Naive thymus-derived CD8-positive, alpha-beta T cell (primary cell): ENCODE measurements at regions of chr3 and their contacts with region 1.

Region 1: DNA sequence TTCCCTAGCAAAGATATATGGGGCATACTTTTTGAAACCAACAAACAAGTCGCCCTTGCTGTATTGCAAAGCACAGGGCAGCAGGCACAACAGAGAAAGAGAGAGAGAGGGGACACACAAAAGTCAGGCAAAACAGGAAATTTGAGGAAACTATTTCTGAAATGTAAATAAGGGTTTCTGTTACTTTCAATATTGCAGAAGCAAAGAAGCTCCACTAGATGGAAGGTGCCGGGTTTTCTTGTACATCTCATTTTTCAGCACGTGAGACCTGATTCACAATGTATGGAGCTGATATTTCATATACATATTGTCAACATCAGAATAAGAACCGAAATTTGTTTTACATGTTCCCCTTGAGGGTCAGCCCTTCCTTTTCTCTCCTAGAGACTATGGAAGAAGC is 127.4 kb downstream of the FOXP1 start:
- DNase-seq: peak in 4 of 10 donors; percentile 26 to 57 (median 54)
- ATAC-seq: peak; percentile 18 to 32
- H3K4me3 Mint-ChIP-seq: peak overlapping the region; percentile 60 to 88 (median 80)
- H3K27ac Mint-ChIP-seq: peak overlapping the region; percentile 89 to 99 (median 98)
- H3K4me1 Mint-ChIP-seq: peaks cover 50 to 97% (median 87%) of the 10 kb centered on the region in 4 donors
- H3K27me3 Mint-ChIP-seq: no peaks in the 10 kb centered on the region

Region 2: GRCh38 chr3:71416876-71417275 is 39.3 kb before region 1 on chr3:
- POLR2A ChIA-PET with region 1: interaction called, 19 read pairs
- DNase-seq: peak in 9 of 10 donors; percentile 29 to 80 (median 69)
- ATAC-seq: peak; percentile 64 to 74
- H3K4me3 Mint-ChIP-seq: peak overlapping the region; percentile 53 to 88 (median 76)
- H3K27ac Mint-ChIP-seq: peak overlapping the region; percentile 91 to 99 (median 96)
- H3K4me1 Mint-ChIP-seq: peaks cover 44 to 95% (median 89%) of the 10 kb centered on the region in 4 donors
- H3K27me3 Mint-ChIP-seq: no peaks in the 10 kb centered on the region

Region 3: GRCh38 chr3:71438071-71438685 is 18.0 kb before region 1 on chr3:
- POLR2A ChIA-PET with region 1: interaction called, 164 read pairs
- DNase-seq: no peak
- ATAC-seq: no peak
- H3K4me3 Mint-ChIP-seq: peak overlapping the region; percentile 7 to 84 (median 68)
- H3K27ac Mint-ChIP-seq: peak overlapping the region; percentile 95 to 99 (median 99)
- H3K4me1 Mint-ChIP-seq: peaks cover 49 to 93% (median 91%) of the 10 kb centered on the region in 4 donors
- H3K27me3 Mint-ChIP-seq: no peaks in the 10 kb centered on the region

Region 4: GRCh38 chr3:71466483-71466882 is 10.3 kb after region 1 on chr3:
- POLR2A ChIA-PET with region 1: interaction called, 10 read pairs
- DNase-seq: no peak
- ATAC-seq: no peak
- H3K4me3 Mint-ChIP-seq: peak overlapping the region in 2 of 10 donors; percentile 32 to 67
- H3K27ac Mint-ChIP-seq: peak overlapping the region; percentile 5 to 92 (median 82)
- H3K4me1 Mint-ChIP-seq: peaks cover 40 to 93% (median 82%) of the 10 kb centered on the region in 4 donors
- H3K27me3 Mint-ChIP-seq: no peaks in the 10 kb centered on the region

Region 5: DNA sequence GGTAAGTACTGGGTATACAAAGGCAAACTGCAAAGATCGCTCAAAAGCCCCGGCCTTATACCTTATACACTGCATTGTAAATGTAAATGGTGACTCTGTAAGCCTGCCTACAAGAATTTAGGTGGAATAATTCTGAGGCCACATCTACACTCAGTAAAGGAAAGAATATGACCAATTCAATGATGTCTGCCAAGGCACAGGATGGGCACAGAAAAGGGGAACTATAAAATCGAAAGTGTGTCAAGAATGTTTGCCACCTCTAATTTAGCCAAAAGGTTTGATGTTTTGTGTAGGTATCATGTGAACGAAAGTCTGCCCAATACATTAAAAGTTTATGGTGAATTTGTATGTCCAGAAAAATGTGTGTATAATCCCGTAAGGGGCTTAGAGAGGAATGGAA is 31.3 kb after region 1 on chr3:
- POLR2A ChIA-PET with region 1: interaction called, 126 read pairs
- DNase-seq: peak in 2 of 10 donors; percentile 26 to 31
- ATAC-seq: peak in 1 of 2 donors; percentile 11
- H3K4me3 Mint-ChIP-seq: peak overlapping the region; percentile 74 to 100 (median 88)
- H3K27ac Mint-ChIP-seq: peak overlapping the region; percentile 95 to 100 (median 98)
- H3K4me1 Mint-ChIP-seq: peaks cover 32 to 91% (median 87%) of the 10 kb centered on the region in 4 donors
- H3K27me3 Mint-ChIP-seq: no peaks in the 10 kb centered on the region

Region 6: DNA sequence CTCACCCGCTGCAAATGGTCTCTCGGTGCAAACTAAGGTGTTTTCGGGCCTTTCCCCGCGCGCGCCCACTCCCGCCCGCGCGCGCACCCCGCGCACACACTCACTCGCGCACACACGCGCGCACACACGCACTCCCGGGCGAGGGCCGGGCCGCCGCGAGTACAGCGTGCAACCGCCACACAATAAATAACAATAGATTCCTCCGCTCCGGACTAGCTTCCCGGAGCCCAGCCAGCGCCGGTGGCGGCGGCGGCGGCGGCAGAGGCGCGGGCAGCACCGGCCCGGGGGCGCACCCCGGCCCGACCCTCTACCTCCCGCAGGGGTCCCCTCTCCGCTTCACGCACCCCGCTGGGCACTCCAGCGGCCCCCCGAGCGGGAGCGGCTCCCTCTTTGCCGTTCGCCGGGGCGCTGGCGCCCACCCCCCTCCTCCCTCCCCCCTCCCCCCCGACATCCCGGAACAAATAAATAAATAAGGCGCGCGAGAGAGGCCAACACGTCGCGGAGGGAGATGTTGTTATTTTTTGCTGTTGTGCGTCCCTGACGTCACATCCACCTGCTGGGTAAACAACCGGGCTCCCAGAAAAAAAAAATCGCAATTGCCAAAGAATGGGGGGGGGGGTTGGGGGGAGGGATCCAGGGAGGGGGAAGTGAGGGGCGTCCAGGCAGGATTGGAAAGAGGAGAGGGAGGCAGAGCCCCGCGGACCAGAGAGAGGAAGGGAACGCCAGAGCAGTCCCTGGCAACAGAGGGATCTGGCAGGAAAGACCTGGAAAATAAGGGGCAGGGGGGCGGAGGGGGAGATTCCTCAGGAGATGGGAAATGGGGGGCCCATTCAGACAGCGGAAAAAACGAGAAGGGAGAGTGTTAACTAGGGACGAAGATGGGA is 127.7 kb after region 1 on chr3 and contains the start of gene FOXP1:
- POLR2A ChIA-PET with region 1: interaction called, 13 read pairs
- DNase-seq: peak; percentile 33 to 76 (median 67)
- ATAC-seq: peak; percentile 36 to 53
- H3K4me3 Mint-ChIP-seq: peak within 1 kb of the TSS; percentile 92 to 98 (median 96)
- H3K27ac Mint-ChIP-seq: peak within 1 kb of the TSS; percentile 93 to 99 (median 96)
- H3K4me1 Mint-ChIP-seq: peaks cover 11 to 52% (median 42%) of the 10 kb centered on the region in 4 donors
- H3K27me3 Mint-ChIP-seq: no peaks in the 10 kb centered on the region
- polyA plus RNA-seq, gene FOXP1: 280 to 382 (median 361) TPM

Region 7: GRCh38 chr3:71694358-71694999 is 238.3 kb after region 1 on chr3:
- POLR2A ChIA-PET with region 1: no interaction called
- DNase-seq: no peak
- ATAC-seq: no peak
- H3K4me3 Mint-ChIP-seq: no peak overlapping the region
- H3K27ac Mint-ChIP-seq: peak overlapping the region in 1 of 10 donors; percentile 34
- H3K4me1 Mint-ChIP-seq: peaks cover 0 to 14% (median 7%) of the 10 kb centered on the region in 4 donors
- H3K27me3 Mint-ChIP-seq: no peaks in the 10 kb centered on the region